Activated naive CD4-positive, alpha-beta T cell treated with anti-CD3 and anti-CD28 coated beads, Interleukin-2, amount 10 ng/mL, durations not matched to agents 7 days and 5 days (primary cell): ENCODE measurements at regions of chr17 and their contacts with region 1.

Region 1: GRCh38 chr17:67258821-67259468 is 13.9 kb upstream of the HELZ start:
- DNase-seq: peak; percentile 32
- H3K4me3 Mint-ChIP-seq: no peak overlapping the region
- H3K27ac Mint-ChIP-seq: peak overlapping the region; percentile 72
- H3K4me1 Mint-ChIP-seq: peaks cover 45% of the 10 kb centered on the region
- H3K27me3 Mint-ChIP-seq: peaks cover 12% of the 10 kb centered on the region

Region 2: DNA sequence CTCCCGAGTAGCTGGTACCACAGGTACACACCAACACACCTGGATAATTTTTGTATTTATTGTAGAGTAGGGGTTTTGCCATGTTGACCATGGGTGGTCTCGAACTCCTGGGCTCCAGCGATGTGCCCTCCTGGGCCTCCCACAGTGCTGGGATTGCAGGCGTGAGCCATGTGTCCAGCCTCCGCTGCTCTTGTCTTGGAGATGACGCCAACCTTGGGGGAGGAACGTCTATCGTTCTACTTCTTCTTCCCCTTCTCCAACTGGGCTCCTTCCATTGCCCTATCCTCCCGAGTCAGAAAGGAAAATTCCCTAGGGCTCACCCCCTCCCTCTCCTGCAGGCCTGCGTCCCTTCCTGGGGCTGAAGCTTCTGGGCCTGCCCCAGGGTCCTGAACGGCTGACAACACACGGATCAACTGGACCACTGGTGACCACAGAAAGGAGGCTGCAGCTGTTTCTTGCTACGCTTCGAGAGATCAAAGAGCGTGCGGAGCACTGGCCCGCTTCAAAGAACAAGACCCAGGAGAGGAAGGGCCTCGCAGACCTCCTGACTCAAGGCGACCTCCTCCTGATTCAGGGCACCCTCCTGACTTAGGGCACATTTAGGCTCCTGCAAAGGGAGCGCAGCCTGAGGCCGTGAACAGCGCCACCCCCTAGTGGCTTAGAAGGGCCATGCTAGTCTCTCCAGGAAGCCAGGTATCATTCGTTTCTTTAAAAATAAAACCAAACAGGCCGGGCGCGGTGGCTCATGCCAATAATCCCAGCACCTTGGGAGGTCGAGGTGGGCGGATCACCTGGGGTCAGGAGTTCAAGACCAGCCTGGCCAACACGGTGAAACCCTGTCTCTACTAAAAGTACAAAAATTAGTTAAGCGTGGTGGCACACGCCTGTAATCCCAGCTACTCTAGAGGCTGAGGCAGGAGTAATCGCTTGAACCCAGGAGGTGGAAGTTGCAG is 34.6 kb after region 1 on chr17:
- CTCF ChIA-PET with region 1: interaction called, 10 read pairs
- DNase-seq: peak; percentile 80
- H3K4me3 Mint-ChIP-seq: no peak overlapping the region
- H3K27ac Mint-ChIP-seq: no peak overlapping the region
- H3K4me1 Mint-ChIP-seq: no peaks in the 10 kb centered on the region
- H3K27me3 Mint-ChIP-seq: peaks cover 18% of the 10 kb centered on the region